Dendritic cell treated with granulocyte-macrophage colony-stimulating factor and Interleukin-4, amounts not matched to agents 40 ng/mL and 50 ng/mL, for 4 days (primary cell): ENCODE measurements at regions of chr10 and their contacts with region 1.

Region 1: GRCh38 chr10:11724938-11725776 is 17.0 kb upstream of the ECHDC3 start:
- H3K4me3 Mint-ChIP-seq: no peak overlapping the region
- H3K27ac Mint-ChIP-seq: no peak overlapping the region
- H3K4me1 Mint-ChIP-seq: peaks cover 32% of the 10 kb centered on the region
- H3K27me3 Mint-ChIP-seq: peaks cover 21% of the 10 kb centered on the region

Region 2: GRCh38 chr10:11515596-11516430 is 209.3 kb before region 1 on chr10:
- intact Hi-C with region 1: loop called (anchors 1 kb)
- H3K4me3 Mint-ChIP-seq: no peak overlapping the region
- H3K27ac Mint-ChIP-seq: no peak overlapping the region
- H3K4me1 Mint-ChIP-seq: peaks cover 6% of the 10 kb centered on the region
- H3K27me3 Mint-ChIP-seq: no peaks in the 10 kb centered on the region

Region 3: GRCh38 chr10:11611248-11612020 is 113.7 kb before region 1 on chr10 and contains the start of gene USP6NL:
- intact Hi-C with region 1: loop called (anchors 5 kb)
- H3K4me3 Mint-ChIP-seq: peak within 1 kb of the TSS; percentile 83
- H3K27ac Mint-ChIP-seq: peak within 1 kb of the TSS; percentile 74
- H3K4me1 Mint-ChIP-seq: peaks cover 22% of the 10 kb centered on the region
- H3K27me3 Mint-ChIP-seq: no peaks in the 10 kb centered on the region

Region 4: GRCh38 chr10:11625019-11625735 is 100.0 kb before region 1 on chr10:
- intact Hi-C with region 1: loop called (anchors 5 kb)
- H3K4me3 Mint-ChIP-seq: peak overlapping the region; percentile 17
- H3K27ac Mint-ChIP-seq: peak overlapping the region; percentile 63
- H3K4me1 Mint-ChIP-seq: peaks cover 12% of the 10 kb centered on the region
- H3K27me3 Mint-ChIP-seq: peaks cover 20% of the 10 kb centered on the region

Region 5: GRCh38 chr10:11655836-11656235 is 69.3 kb before region 1 on chr10:
- intact Hi-C with region 1: no loop called
- H3K4me3 Mint-ChIP-seq: no peak overlapping the region
- H3K27ac Mint-ChIP-seq: no peak overlapping the region
- H3K4me1 Mint-ChIP-seq: peaks cover 23% of the 10 kb centered on the region
- H3K27me3 Mint-ChIP-seq: peaks cover 29% of the 10 kb centered on the region

Region 6: DNA sequence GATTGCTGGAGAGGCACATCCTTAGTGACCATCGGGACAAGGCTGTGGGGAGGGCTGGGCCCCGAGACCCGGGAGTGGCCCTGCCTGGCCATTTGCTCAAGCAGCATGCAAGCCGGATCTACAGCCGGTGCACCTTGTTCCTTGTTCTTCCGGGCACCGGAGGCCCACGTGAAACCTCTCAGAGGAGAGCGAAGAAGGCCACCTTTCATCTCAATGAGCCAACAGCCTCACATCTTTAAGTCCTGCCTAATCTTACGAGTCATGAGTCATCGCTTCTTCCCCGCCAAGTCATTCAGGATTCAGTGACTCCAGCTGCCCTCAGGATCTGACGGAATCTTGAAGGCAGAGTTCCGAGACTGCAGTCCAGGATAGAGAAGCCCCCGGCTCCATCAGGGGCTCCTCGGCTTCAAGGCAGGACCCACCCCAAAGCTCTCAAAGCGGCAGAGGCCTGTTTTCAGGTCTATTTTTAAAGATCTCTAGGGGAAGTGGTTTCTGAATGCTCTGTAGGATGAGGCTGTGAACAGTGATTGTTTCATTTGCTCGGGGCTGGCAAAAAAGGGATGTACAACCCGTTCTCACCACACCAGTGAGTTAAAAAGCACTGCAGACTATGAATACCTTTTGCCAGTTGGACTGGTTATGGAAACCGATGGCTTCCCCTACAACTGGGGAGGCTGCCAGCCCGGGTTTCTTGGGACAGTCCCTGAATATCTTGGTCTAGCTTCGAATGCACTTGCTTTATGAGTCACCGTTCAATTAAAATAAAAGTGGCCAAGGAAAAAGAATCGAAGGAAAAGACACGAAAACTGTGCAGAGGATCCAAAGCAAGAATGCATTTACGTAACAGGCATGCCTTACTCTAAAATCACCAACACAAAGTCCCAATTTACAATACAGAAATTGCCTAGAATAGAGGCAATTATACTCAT is 40.2 kb before region 1 on chr10:
- intact Hi-C with region 1: loop called (anchors 5 kb)
- H3K4me3 Mint-ChIP-seq: peak overlapping the region; percentile 77
- H3K27ac Mint-ChIP-seq: peak overlapping the region; percentile 96
- H3K4me1 Mint-ChIP-seq: peaks cover 69% of the 10 kb centered on the region
- H3K27me3 Mint-ChIP-seq: peaks cover 47% of the 10 kb centered on the region